Ovary (tissue), 10 donors: ENCODE measurements at regions of chr3 and their contacts with region 1.

Region 1: DNA sequence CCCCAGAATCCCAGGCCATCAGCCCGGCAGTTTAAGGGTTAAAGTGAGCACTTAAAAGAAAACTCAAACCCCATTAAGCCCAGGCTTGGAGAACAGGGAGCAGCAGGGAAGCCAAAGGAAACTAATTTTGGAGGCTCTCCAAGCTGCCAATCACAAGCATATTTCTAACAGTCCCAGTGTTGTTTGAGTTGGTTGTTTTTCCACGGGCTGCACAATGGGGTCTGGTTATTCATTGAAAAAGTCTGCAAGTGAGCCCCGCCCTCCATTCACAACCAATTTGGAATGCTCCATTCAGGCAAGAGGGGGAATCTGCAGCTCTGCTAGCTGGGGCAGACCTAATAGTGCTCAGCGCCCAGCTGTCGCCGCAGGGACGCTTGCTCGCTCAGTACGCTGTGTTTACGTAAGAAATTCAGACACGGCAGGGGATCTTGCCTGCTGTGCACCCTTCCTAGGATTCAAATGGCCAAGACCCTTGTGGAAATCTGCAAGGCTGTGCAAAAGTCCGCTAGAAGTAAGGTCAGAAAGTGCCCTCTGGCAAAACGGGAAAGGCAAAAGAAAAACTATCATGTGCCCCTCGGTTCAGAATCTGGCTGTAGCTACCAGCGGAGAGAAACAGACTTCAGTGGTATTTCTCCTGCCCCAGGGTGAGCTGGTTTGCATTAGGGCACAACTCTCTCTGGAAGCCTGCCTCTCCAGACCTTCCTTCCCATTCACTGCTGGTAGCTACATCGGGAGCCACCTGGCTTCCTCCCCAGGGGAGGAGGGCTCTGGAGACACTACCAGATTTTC is 11.0 kb downstream of the ETV5 start:
- DNase-seq: peak in 2 of 5 donors; percentile 13 to 21
- H3K4me3 ChIP-seq: no peak overlapping the region
- H3K27ac ChIP-seq: no peak overlapping the region
- H3K4me1 ChIP-seq: no peaks in the 10 kb centered on the region
- H3K27me3 ChIP-seq: no peaks in the 10 kb centered on the region
- CTCF ChIP-seq: no peak
- EP300 ChIP-seq: no peak
- POLR2A ChIP-seq: no peak

Region 2: GRCh38 chr3:185936814-185937688 is 160.8 kb before region 1 on chr3:
- intact Hi-C with region 1: no loop called
- DNase-seq: peak; percentile 87 to 95 (median 93)
- H3K4me3 ChIP-seq: peak overlapping the region; percentile 95
- H3K27ac ChIP-seq: peak overlapping the region; percentile 96
- H3K4me1 ChIP-seq: peaks cover 5% of the 10 kb centered on the region
- H3K27me3 ChIP-seq: no peaks in the 10 kb centered on the region
- CTCF ChIP-seq: peak in 1 of 3 donors; percentile 1
- EP300 ChIP-seq: no peak
- POLR2A ChIP-seq: peak; percentile 44

Region 3: GRCh38 chr3:186220911-186221645 is 123.2 kb after region 1 on chr3:
- intact Hi-C with region 1: loop called in 1 of 4 experiments (anchors 5 kb)
- DNase-seq: no peak
- H3K4me3 ChIP-seq: no peak overlapping the region
- H3K27ac ChIP-seq: no peak overlapping the region
- H3K4me1 ChIP-seq: no peaks in the 10 kb centered on the region
- H3K27me3 ChIP-seq: no peaks in the 10 kb centered on the region
- CTCF ChIP-seq: no peak
- EP300 ChIP-seq: no peak
- POLR2A ChIP-seq: no peak